Endothelial cell of umbilical vein (primary cell): ENCODE measurements at regions of chr9 and their contacts with region 1.

Region 1: GRCh38 chr9:84170521-84171141 is 169.9 kb downstream of the SLC28A3 start:
- DNase-seq: peak; percentile 33
- H3K4me3 ChIP-seq: no peak overlapping the region
- H3K27ac ChIP-seq: no peak overlapping the region
- H3K4me1 ChIP-seq: peaks cover 11% of the 10 kb centered on the region
- H3K27me3 ChIP-seq: peaks cover 0 to 1% of the 10 kb centered on the region in 2 experiments
- CTCF ChIP-seq: no peak
- POLR2A ChIP-seq: no peak

Region 2: GRCh38 chr9:83980395-83981125 is 190.1 kb before region 1 on chr9 and contains the start of gene RMI1:
- CTCF ChIA-PET with region 1: interaction called, 19 read pairs
- POLR2A ChIA-PET with region 1: no interaction called
- dilution Hi-C with region 1: no loop called
- intact Hi-C with region 1: loop called (anchors 1 kb)
- DNase-seq: peak; percentile 97
- H3K4me3 ChIP-seq: peak within 1 kb of the TSS; percentile 67 to 96 (median 90)
- H3K27ac ChIP-seq: peak within 1 kb of the TSS; percentile 95
- H3K4me1 ChIP-seq: peaks cover 13% of the 10 kb centered on the region
- H3K27me3 ChIP-seq: no peaks in the 10 kb centered on the region
- CTCF ChIP-seq: no peak
- POLR2A ChIP-seq: peak; percentile 95
- total RNA-seq, gene RMI1: 11.4 and 11.5 TPM in 2 replicates

Region 3: GRCh38 chr9:84101964-84102632 is 68.5 kb before region 1 on chr9:
- CTCF ChIA-PET with region 1: interaction called, 4 read pairs
- POLR2A ChIA-PET with region 1: no interaction called
- dilution Hi-C with region 1: no loop called
- intact Hi-C with region 1: loop called (anchors 5 kb)
- DNase-seq: no peak
- H3K4me3 ChIP-seq: no peak overlapping the region
- H3K27ac ChIP-seq: no peak overlapping the region
- H3K4me1 ChIP-seq: no peaks in the 10 kb centered on the region
- H3K27me3 ChIP-seq: peaks cover 9 to 17% of the 10 kb centered on the region in 2 experiments
- CTCF ChIP-seq: no peak
- POLR2A ChIP-seq: no peak

Region 4: GRCh38 chr9:84146893-84147710 is 23.5 kb before region 1 on chr9:
- CTCF ChIA-PET with region 1: interaction called, 20 read pairs
- POLR2A ChIA-PET with region 1: no interaction called
- dilution Hi-C with region 1: no loop called
- intact Hi-C with region 1: loop called (anchors 2 kb)
- DNase-seq: peak; percentile 26
- H3K4me3 ChIP-seq: peak overlapping the region in 1 of 3 experiments; percentile 14
- H3K27ac ChIP-seq: peak overlapping the region; percentile 40
- H3K4me1 ChIP-seq: peaks cover 34% of the 10 kb centered on the region
- H3K27me3 ChIP-seq: no peaks in the 10 kb centered on the region
- CTCF ChIP-seq: no peak
- POLR2A ChIP-seq: no peak

Region 5: GRCh38 chr9:84187090-84187489 is 16.5 kb after region 1 on chr9:
- CTCF ChIA-PET with region 1: interaction called, 12 read pairs
- POLR2A ChIA-PET with region 1: no interaction called
- dilution Hi-C with region 1: no loop called
- intact Hi-C with region 1: no loop called
- DNase-seq: no peak
- H3K4me3 ChIP-seq: no peak overlapping the region
- H3K27ac ChIP-seq: no peak overlapping the region
- H3K4me1 ChIP-seq: no peaks in the 10 kb centered on the region
- H3K27me3 ChIP-seq: peaks cover 2 to 8% of the 10 kb centered on the region in 2 experiments
- CTCF ChIP-seq: no peak
- POLR2A ChIP-seq: no peak